HAP-1 (cell line): ENCODE measurements at regions of chr2 and their contacts with region 1.

Region 1: GRCh38 chr2:21317131-21317530 is 193.4 kb downstream of the TDRD15 start:
- DNase-seq: peak; percentile 65 to 78
- H3K4me3 ChIP-seq: no peak overlapping the region
- H3K4me1 ChIP-seq: peaks cover 13% of the 10 kb centered on the region
- H3K27me3 ChIP-seq: no peaks in the 10 kb centered on the region

Region 2: GRCh38 chr2:20650880-20651730 is 666.0 kb before region 1 on chr2 and contains the start of gene HS1BP3:
- in situ Hi-C with region 1: loop called (anchors 25 kb)
- DNase-seq: peak; percentile 75 to 81
- H3K4me3 ChIP-seq: peak within 1 kb of the TSS; percentile 85
- H3K4me1 ChIP-seq: peaks cover 7% of the 10 kb centered on the region
- H3K27me3 ChIP-seq: no peaks in the 10 kb centered on the region

Region 3: DNA sequence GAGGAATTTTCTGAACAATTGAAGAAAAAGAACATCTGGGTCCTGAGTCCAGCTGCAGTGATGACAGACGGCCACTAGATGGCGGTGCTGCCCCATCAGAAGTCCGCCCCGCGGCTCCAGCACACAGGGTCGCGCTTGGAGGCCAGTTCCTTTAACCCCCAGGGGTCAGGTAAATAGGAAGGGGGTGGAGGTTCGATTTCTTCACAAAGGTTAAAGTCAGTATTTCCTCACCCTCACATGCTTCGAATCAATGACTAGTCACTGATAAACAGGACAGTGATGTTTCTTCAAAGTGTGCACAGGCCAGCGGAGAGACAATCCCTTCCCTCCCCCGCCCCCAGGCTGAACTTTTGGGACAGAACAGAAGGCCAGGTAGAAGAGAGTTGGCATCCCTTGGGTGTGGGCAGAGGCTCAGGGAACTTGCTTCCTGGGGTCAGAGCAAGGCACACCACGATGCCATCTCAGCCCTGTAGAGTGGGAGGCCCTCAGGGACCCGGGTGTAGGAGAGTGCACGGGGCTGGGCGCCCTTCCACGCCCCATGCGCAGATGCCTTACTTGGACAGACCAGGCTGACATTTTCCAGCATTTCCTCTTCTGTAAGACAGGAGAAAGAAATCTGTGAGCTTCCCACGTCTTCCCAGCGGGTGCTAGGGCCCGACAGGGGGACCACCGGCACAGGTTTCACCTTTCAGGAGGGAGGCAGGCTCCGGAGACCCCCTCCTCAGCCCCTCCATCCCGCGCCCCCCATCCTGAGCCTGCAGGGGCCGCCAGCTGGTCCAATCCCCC is 274.0 kb before region 1 on chr2:
- in situ Hi-C with region 1: loop called (anchors 25 kb)
- DNase-seq: peak; percentile 39 to 75
- H3K4me3 ChIP-seq: no peak overlapping the region
- H3K4me1 ChIP-seq: no peaks in the 10 kb centered on the region
- H3K27me3 ChIP-seq: no peaks in the 10 kb centered on the region

Region 4: DNA sequence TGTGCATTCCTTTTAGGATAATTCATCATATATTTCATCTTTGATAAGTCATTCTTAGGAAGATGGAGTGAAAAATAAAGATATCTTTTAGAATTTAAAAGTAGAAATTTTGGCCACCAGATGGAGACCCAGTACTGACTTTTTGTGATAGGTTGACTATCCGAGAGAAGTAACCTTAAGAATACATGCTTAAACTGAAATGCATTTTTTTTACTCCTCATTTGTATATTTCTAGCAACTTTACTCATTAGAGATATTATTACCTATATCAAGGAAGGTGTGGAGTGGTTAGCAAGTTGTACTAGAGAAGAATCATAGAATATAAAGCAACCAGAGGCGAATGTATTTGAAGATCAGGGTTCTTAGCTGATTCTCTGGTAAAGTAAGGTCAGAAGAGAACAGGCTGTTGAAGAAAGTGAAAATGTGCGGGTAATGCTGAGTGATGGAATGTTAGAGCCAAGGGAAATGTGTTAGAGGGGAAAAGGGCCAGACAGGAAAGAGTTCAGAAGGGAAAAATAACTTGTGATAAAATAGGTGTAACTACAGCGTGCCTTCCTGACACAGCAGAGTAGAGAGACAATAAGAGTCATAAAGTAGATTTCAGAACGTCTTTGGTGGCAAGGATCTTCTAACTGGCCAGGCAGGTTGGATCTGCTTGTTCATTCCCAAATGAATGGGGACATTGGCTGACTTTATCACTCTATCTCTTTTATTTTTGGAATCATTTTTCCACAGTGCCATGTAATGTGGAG is 141.1 kb before region 1 on chr2:
- in situ Hi-C with region 1: loop called (anchors 10 kb)
- DNase-seq: peak in 1 of 2 experiments; percentile 39
- H3K4me3 ChIP-seq: no peak overlapping the region
- H3K4me1 ChIP-seq: no peaks in the 10 kb centered on the region
- H3K27me3 ChIP-seq: peaks cover 8% of the 10 kb centered on the region